Panc1 (cell line): ENCODE measurements at regions of chr7 and their contacts with region 1.

Region 1: DNA sequence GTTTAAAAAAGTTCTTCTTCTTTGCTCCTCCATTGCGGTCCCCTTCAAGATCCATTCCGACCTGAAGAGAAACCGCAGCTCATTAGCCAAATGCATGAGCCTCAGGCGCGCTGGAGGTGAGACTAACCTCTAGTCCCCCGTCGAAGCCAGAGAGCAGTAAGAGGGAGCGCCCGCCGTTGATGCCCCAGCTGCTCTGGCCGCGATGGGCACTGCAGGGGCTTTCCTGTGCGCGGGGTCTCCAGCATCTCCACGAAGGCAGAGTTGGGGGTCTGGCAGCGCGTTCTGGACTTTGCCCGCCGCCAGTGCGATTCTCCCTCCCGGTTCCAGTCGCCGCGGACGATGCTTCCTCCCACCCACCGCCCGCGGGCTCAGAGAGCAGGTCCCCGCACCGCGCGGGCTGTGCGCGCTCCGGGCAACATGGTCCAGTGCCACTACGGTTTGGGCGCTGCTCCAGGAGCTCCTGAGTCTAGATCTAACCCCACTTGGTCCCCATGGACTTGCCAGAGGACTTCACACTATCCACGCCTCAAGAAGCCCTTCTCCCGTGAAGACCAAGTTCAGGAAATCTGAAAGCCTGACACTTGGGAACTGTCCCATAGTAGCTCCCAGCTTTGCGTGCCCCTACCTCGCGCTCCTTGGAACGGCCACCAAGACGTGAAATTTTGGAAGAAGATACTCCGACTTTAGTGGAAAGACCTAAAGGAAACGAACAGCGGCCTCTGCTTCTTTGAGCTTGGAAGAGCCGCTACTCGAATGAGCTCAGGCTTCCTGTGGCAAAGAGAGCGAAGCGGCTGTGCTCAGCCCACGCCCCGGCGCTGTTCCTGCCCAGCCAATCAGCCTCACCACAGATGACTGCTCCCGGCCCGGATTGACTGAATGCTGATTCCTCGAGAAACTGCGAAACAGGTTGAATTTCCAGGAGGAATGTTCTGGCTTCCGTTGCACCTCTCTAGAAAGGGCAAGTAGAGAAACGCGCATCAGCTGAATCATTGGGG is at the start of gene ABCB1:
- DNase-seq: no peak
- ATAC-seq: peak; percentile 93
- H3K4me3 ChIP-seq: peak within 1 kb of the TSS; percentile 31 to 51
- H3K27ac ChIP-seq: no peak within 1 kb of the TSS
- H3K4me1 ChIP-seq: 0 out of 2 replicates have a peak, but pooled peaks cover 5% of the 10 kb centered on the region
- H3K27me3 ChIP-seq: peaks cover 43% of the 10 kb centered on the region
- CTCF ChIP-seq: no peak
- total RNA-seq, gene ABCB1: 0.67 TPM

Region 2: DNA sequence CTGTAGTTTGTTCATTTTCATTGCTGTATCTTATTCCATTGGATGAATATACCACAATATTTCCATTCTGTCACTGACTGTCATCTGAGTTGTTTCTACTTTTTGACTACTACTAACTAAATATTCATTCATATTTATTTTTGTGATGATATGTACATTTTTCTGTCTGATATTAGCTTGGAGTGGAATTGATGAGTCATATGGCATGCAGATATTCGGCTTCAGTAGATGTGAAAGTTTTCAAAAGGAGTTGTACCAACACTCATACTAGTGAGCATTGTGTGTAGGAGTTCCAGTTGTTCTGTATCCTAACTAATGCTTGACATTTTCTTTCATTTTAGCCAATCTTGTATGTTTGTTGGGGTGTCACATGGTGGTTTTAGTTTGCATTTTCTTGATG is 35.5 kb after region 1 on chr7:
- CTCF ChIA-PET with region 1: no interaction called
- POLR2A ChIA-PET with region 1: interaction called, 16 read pairs
- in situ Hi-C with region 1: no loop called
- intact Hi-C with region 1: no loop called
- DNase-seq: no peak
- ATAC-seq: no peak
- H3K4me3 ChIP-seq: no peak overlapping the region
- H3K27ac ChIP-seq: no peak overlapping the region
- H3K4me1 ChIP-seq: no peaks in the 10 kb centered on the region
- H3K27me3 ChIP-seq: no peaks in the 10 kb centered on the region
- CTCF ChIP-seq: no peak

Region 3: GRCh38 chr7:87658553-87658952 is 58.1 kb after region 1 on chr7:
- CTCF ChIA-PET with region 1: no interaction called
- POLR2A ChIA-PET with region 1: interaction called, 17 read pairs
- in situ Hi-C with region 1: no loop called
- intact Hi-C with region 1: no loop called
- DNase-seq: no peak
- ATAC-seq: no peak
- H3K4me3 ChIP-seq: no peak overlapping the region
- H3K27ac ChIP-seq: no peak overlapping the region
- H3K4me1 ChIP-seq: no peaks in the 10 kb centered on the region
- H3K27me3 ChIP-seq: no peaks in the 10 kb centered on the region
- CTCF ChIP-seq: no peak